ENCODE measurements at regions of chr5 and their contacts with region 1.

Region 1: DNA sequence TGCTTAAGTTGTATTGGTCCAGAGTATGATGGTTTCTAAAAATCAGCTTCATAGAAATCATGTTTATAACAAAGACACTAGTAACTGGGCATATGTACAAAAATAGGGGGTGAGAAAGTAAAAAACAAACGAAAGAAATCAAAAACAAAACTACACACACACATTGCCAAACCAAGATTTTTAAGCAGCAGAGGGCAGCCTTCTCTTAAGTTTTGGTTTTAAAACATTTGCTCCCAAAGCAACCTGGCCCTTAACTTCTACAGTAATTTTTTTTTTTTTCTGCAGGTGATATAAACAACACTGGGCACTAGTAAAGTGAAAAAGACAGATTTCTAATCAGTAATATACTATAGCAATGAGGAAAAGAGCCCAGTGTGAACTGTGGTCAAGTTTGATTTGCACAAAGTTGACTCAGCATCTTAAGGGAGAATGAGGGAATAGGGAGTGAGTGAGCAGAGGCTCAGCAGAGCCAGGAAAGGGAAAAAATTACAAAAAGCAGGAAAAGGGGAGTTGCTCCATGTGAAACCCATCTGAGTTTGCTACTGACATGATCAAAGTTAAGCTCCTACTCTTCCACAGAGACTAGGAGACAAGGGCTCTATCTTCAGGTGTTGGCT is 13.4 kb upstream of the GAPT start:
- DNase-seq: no peak

Region 2: GRCh38 chr5:58259685-58260152 is 218.1 kb before region 1 on chr5:
- intact Hi-C with region 1: no loop called
- DNase-seq: no peak

Region 3: GRCh38 chr5:58498340-58498942 is 20.6 kb after region 1 on chr5:
- intact Hi-C with region 1: no loop called
- DNase-seq: peak in 6 of 10 donors; percentile 20 to 73 (median 38)

Region 4: GRCh38 chr5:58670582-58670981 is 192.7 kb after region 1 on chr5:
- intact Hi-C with region 1: no loop called
- DNase-seq: no peak

Region 5: DNA sequence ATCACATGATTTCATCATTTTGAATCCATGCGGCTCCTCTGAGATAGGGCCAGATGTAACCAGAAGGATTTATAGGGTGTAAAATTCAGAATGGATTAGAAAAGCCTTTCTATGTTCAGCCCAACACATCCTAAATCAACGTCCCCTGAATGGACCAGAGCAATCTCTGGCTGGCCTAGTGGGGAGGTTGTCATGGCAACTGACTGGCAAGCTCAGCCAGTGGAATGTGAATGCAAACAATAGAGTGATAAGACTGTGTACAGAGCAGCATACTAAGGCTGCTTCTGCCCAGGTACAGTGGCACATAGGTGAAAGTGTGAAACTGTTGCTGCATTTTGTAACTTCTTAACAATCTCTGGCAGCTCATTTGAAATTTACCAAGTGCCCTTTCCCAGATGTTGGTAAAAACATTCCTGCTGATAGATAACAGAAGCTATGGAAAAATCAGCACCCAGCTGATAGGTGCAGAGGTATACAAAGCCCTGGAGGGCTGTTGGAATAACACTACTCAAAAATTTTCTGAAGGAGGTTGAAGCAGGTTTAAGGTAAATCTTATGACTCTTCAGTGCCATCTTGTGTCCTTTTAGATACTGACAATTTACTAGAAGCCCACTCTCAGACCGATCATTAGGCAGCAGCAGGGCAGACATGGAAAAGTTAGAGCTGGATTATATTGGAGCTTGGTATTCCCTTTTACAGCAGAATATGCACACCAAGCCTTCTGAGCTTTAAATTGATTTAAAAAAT is 372.2 kb after region 1 on chr5:
- intact Hi-C with region 1: loop called (anchors 5 kb)
- DNase-seq: peak in 6 of 10 donors; percentile 12 to 88 (median 45)

Region 6: DNA sequence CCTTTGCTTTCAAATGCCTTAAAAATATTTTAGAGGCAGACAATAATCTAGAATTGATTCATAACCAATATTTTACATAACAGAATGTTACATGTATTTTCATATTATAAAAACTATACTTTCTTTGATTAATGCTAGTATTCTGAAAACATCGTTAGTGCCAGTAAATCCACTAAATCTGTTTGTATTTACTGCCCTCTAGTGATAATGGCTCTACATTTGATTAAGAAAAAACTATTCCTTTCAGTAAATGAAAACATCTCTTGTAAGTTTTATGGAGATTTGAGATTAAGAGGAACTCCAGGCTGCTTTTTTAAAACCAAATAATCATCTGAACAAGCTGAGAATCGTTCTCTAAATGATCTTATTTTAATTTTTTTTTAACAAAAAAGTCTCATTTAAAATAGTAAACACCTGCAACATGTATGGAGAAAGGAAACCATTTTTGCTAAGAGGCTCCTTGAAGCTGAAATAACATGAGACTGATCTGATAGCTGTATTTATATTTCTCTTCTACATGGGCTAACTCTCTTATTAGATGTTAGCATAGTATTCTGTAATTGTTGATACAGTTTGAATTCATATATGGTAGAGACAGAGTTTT is 529.7 kb after region 1 on chr5:
- intact Hi-C with region 1: loop called (anchors 5 kb)
- DNase-seq: no peak

Measured in posterior cingulate gyrus (tissue), 11 donors.